ENCODE measurements at regions of chr6 and their contacts with region 1.

Region 1: DNA sequence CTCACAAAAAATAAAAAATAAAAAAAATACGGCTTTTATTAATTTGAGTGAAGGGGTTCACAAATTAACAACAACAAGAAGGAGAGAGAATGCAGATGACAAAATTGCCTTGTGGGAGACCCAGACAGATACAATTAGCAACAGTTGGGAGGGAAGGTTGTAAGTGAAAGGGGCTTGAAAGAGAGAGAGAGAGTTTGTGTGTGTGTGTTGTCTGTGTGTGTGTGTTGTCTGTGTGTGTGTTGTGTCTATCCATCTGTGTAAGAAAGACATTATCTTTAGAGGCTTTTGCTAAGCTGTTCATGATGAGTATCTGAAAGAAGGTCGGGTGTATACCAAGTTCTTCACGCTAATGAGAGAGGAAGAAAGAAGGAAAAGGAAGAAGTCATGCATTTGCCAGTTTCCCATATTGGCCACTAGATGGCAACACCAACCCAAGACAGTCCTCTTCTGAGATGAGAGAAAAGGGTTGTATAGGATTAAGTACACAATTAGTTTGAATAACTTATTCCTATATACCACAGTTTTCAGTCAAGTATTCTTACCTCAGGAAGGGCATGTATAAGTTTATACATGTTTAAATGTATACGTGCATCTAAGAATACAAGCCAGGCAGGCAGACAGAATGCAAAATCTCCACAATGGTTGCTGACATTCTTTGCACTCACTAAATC is 63.7 kb upstream of the CD2AP start:
- DNase-seq: peak; percentile 63
- H3K4me3 ChIP-seq: peak overlapping the region; percentile 24
- H3K27ac ChIP-seq: peak overlapping the region; percentile 69
- H3K4me1 ChIP-seq: no peaks in the 10 kb centered on the region
- H3K27me3 ChIP-seq: no peaks in the 10 kb centered on the region
- CTCF ChIP-seq: peak; percentile 88

Region 2: DNA sequence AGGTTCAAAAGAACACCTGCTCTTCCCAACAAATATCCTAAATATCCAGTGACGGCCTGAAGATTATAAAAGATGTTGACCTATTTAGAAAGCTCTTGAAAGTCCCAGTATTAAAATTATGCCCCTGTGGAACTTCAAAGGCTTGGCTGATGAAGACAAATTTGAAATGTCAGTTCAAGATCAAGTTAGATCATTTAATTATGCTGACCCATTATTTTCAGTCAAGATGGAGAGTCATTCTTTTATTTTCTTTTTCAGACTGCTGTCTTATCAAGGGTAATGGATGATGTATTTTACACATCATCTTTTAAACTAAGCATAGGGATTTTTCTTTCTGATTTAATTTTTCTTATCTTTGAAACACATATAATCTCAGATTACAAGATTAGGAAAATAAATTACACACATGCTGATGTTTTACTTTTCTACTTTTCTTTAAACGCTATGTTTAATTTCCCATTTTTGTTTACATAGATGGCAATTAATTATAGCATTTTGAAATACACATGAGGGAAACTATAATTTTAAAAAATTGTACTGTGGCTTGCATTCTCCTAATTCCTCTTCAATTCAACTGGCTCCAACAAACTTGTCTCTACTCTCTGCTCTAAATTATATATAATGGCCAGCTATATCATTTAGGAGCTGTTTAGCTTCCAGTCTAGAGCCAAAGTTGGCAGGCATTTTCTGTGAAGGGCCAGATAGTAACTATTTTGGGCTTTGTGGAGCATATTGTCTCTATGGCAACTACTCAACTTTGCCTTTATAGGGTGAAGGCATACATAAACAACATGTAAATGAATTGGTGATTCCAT is 1046.3 kb before region 1 on chr6:
- intact Hi-C with region 1: no loop called
- DNase-seq: no peak
- H3K4me3 ChIP-seq: no peak overlapping the region
- H3K27ac ChIP-seq: no peak overlapping the region
- H3K4me1 ChIP-seq: no peaks in the 10 kb centered on the region
- H3K27me3 ChIP-seq: no peaks in the 10 kb centered on the region
- CTCF ChIP-seq: no peak

Region 3: DNA sequence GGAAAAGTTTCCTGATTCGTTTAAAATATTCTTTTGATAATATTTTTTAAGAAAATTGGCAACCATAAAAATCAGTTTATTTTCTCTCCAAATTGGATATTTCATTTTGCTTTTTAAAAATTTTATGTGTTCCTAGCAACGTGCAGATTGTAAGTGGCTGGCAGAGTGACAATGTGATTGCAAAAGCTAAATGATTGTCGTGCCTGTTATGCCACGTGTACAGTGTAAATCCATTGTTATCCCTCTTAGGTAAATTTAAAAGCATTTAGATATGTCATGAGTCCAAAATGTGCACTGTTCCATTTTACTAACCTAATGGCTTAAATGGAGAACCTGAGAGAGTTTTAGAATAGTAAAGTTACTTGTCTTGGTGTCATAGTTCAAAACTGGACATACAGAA is 190.1 kb after region 1 on chr6:
- intact Hi-C with region 1: loop called (anchors 10 kb)
- DNase-seq: peak; percentile 31
- H3K4me3 ChIP-seq: no peak overlapping the region
- H3K27ac ChIP-seq: no peak overlapping the region
- H3K4me1 ChIP-seq: no peaks in the 10 kb centered on the region
- H3K27me3 ChIP-seq: no peaks in the 10 kb centered on the region
- CTCF ChIP-seq: no peak

Region 4: DNA sequence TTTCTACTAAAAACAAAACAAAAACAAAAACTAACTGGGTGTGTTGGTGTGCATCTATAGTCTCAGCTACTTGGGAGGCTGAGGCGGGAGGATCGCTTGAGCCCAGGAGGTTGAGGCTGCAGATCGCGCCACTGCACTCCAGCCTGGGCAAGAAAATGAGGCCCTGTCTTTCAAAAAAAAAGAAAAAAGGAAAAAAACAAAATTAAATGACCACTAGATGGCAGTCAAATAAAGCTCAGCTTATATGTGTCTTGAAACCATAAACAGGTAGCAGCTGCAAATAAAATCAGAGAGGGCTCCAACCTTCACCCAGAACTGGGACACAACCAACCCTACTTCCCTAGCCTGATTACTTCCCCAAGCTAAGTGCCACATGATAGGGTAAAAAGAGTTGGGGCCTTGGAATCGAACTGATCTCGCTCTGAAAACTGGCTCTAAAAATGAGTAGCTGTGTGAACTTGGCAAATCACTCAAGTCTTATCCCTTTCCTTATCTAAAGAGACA is 217.4 kb after region 1 on chr6:
- intact Hi-C with region 1: loop called (anchors 10 kb)
- DNase-seq: peak; percentile 36
- H3K4me3 ChIP-seq: no peak overlapping the region
- H3K27ac ChIP-seq: peak overlapping the region; percentile 21
- H3K4me1 ChIP-seq: no peaks in the 10 kb centered on the region
- H3K27me3 ChIP-seq: no peaks in the 10 kb centered on the region
- CTCF ChIP-seq: peak; percentile 47

Region 5: GRCh38 chr6:47733879-47734558 is 320.1 kb after region 1 on chr6:
- intact Hi-C with region 1: loop called (anchors 10 kb)
- DNase-seq: peak; percentile 27
- H3K4me3 ChIP-seq: no peak overlapping the region
- H3K27ac ChIP-seq: no peak overlapping the region
- H3K4me1 ChIP-seq: no peaks in the 10 kb centered on the region
- H3K27me3 ChIP-seq: no peaks in the 10 kb centered on the region
- CTCF ChIP-seq: no peak

Region 6: DNA sequence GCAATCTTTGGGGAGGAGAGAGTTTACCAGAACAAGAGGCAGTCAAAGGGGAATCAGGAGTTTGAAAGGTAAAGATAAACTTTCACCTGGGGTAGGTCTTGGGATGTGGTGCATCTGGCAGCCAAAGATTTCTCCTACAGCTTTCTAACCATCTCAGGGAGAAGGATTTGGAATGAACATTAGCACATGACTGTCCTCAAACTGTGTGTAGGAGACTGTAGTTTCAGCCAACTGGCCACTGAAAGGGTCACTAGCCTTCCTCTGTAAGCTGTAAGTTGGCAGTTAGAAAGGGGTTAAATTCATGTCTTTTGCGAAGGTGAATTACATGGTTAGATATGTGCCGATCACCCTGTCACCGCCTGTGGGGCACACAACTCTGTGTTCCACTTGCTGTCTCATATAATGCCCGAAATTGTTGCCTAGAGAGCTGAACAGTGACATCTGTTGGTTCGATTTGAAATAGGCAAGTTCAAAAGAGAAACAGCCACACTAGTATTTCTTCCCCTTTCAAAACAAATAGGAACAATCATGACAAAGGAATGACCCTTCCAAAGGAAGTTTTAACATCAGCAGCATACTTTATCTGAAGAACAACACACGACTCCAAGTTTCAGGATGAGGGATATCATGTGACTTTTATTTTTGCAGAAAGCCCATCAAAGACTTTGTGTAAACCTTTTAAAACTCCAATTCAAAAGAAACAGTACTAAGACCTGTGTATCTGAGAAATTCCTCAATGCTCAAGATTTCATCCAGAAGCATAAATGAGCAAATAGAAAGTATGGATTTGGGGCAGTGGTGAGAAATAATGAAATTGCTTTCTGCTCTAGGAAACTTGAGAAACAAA is 366.8 kb after region 1 on chr6:
- intact Hi-C with region 1: loop called (anchors 2 kb)
- DNase-seq: peak; percentile 43
- H3K4me3 ChIP-seq: no peak overlapping the region
- H3K27ac ChIP-seq: no peak overlapping the region
- H3K4me1 ChIP-seq: no peaks in the 10 kb centered on the region
- H3K27me3 ChIP-seq: no peaks in the 10 kb centered on the region
- CTCF ChIP-seq: peak; percentile 48

Measured in colonic mucosa (tissue), 4 donors.